Activated naive CD8-positive, alpha-beta T cell treated with anti-CD3 and anti-CD28 coated beads, Interleukin-2, amount 10 ng/mL, durations not matched to agents 7 days and 5 days (primary cell): ENCODE measurements at regions of chrX and their contacts with region 1.

Region 1: DNA sequence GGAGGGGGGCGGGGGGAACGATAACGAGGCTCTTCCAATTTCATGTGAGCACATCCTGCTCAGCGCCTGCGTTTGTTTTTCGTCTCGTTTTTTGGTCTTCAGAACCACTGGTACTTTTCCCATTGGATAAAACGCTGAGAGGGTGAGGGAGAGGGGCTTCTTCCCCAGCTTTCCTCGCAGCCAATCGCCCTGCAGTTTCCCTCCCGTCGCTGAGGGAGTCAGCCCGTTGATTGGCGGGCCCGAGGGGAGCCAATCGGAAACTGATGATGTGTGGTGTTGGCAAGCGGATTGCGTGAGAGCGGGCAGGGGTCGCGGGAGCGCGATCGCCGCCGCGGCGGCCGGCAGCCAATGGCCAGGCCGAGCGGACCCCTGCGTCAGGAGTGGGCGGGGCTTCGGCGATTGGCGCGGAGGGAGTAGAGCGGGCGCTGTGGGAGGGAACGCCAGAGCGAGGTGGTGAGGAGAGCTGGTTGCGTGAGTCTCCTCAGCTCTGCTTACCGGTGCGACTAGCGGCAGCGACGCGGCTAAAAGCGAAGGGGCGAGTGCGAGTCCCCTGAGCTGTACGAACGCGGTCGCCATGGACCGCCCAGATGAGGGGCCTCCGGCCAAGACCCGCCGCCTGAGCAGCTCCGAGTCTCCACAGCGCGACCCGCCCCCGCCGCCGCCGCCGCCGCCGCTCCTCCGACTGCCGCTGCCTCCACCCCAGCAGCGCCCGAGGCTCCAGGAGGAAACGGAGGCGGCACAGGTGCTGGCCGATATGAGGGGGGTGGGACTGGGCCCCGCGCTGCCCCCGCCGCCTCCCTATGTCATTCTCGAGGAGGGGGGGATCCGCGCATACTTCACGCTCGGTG is at the start of gene TSPYL2:
- DNase-seq: peak; percentile 92
- ATAC-seq: peak; percentile 88
- H3K4me3 Mint-ChIP-seq: peak within 1 kb of the TSS; percentile 94
- H3K27ac Mint-ChIP-seq: peak within 1 kb of the TSS; percentile 99
- H3K4me1 Mint-ChIP-seq: peaks cover 18% of the 10 kb centered on the region
- H3K27me3 Mint-ChIP-seq: no peaks in the 10 kb centered on the region
- total RNA-seq, gene TSPYL2: 73.2 to 76.4 TPM

Region 2: DNA sequence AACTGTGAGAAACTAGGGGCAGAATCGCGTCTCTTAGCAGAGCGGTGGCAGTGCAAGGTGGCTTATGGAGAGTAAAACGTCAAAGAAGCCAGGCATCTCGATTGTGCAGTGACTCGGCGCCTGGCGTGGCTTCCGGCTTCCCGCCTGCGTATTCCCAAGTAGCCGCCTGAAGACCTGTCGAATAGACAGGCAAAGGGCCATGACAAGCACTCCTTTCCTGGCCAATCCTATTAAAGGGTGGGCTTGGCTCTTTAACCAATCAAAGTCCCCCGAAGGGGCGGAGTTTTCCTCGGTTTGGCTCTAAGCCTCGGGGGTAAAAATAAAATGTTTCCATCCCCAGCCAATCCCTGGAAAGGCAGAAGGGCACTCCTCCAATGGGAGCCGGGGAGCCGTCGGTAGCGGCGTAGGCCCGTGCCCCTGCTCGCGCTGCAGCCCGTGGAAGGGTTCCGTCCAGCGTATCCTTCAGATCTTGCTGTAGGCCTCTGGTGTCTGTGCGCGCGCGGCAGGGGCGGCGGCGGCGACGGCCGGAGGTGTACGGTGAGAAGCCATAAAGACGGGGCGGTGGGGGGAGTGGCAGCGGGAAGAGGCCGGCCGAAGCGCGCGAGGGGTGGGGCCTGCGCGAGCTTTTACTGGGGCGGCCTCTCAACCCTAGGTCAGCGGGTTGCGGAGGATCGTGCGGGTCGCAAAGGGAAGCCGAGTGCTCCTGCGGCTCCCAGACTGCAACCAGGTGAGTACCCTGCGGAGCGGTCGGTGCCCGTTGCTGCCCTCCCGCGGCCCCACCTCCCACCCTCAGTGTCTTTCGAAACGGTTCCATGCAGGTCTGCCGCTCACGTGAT is 11.8 kb after region 1 on chrX and contains the start of gene KANTR:
- POLR2A ChIA-PET with region 1: interaction called, 10 read pairs
- DNase-seq: peak; percentile 79
- ATAC-seq: peak; percentile 85
- H3K4me3 Mint-ChIP-seq: peak within 1 kb of the TSS; percentile 90
- H3K27ac Mint-ChIP-seq: peak within 1 kb of the TSS; percentile 88
- H3K4me1 Mint-ChIP-seq: peaks cover 11% of the 10 kb centered on the region
- H3K27me3 Mint-ChIP-seq: no peaks in the 10 kb centered on the region
- total RNA-seq, gene KANTR: 14.2 to 16.1 TPM